Breast epithelium (tissue), 4 donors: ENCODE measurements at regions of chr2 and their contacts with region 1.

Region 1: DNA sequence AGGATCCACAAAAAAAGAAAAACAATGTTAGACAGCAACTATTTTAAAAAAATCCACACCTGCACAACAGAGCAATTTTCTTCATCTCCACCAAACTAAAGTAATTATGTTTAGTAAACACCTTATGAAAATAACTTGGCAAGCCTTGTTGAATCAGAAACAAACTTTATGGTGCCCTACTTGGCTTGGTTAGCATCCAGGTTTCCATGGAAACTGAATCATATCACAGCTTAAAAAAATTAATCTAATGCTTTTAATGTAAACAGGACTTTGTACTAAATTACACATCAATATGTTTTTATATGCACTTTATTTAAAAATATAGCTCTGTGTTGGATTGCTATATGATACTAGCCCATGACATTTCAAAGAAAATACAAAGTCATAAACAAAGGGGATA is 1882.4 kb downstream of the SUCLG1 start:
- DNase-seq: no peak
- H3K4me3 ChIP-seq: no peak overlapping the region
- H3K27ac ChIP-seq: no peak overlapping the region
- H3K4me1 ChIP-seq: no peaks in the 10 kb centered on the region
- H3K27me3 ChIP-seq: no peaks in the 10 kb centered on the region
- CTCF ChIP-seq: no peak
- POLR2A ChIP-seq: no peak

Region 2: DNA sequence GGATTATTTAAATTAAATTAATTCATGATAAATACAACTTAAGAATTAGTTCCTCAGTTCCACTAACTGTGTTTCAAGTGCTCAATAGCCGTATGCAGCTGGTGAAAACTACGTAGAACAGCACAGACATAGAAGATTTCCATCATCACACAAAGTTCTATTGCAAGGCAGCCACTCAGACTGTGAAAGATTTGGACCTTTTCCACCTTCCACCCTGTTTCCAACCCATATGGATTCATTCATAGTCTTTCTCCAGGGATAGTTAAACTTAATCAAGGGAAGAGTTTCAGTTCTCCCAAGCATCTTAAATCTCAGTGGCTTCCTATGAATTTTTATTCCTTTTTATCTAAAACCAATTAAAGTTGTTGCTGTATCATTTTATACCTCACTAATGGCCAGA is 148.4 kb before region 1 on chr2:
- intact Hi-C with region 1: loop called (anchors 5 kb)
- DNase-seq: no peak
- H3K4me3 ChIP-seq: no peak overlapping the region
- H3K27ac ChIP-seq: no peak overlapping the region
- H3K4me1 ChIP-seq: no peaks in the 10 kb centered on the region
- H3K27me3 ChIP-seq: no peaks in the 10 kb centered on the region
- CTCF ChIP-seq: no peak
- POLR2A ChIP-seq: no peak

Region 3: GRCh38 chr2:82591718-82592117 is 15.1 kb after region 1 on chr2:
- intact Hi-C with region 1: no loop called
- DNase-seq: no peak
- H3K4me3 ChIP-seq: no peak overlapping the region
- H3K27ac ChIP-seq: no peak overlapping the region
- H3K4me1 ChIP-seq: no peaks in the 10 kb centered on the region
- H3K27me3 ChIP-seq: no peaks in the 10 kb centered on the region
- CTCF ChIP-seq: no peak
- POLR2A ChIP-seq: no peak

Region 4: DNA sequence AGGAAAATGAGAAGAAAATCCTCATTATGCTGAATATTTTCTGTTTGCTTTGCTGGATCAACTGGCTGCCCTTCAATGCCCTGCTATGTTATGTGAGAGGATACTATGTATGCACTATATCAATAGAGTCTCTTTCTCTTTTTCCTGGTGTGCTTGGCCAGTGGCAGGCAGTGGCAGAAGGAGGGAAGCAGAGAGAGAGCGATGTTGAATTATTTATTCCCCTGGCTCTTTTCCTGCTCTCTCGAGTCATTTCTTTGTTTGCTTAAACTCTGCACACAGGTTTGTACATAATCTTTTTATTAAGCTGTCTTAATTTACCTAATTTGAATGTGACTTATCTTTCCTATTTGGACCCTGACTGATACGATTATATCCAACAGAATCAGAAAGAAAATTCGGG is 155.2 kb after region 1 on chr2:
- intact Hi-C with region 1: no loop called
- DNase-seq: no peak
- H3K4me3 ChIP-seq: no peak overlapping the region
- H3K27ac ChIP-seq: no peak overlapping the region
- H3K4me1 ChIP-seq: no peaks in the 10 kb centered on the region
- H3K27me3 ChIP-seq: no peaks in the 10 kb centered on the region
- CTCF ChIP-seq: no peak
- POLR2A ChIP-seq: no peak